Activated CD8-positive, alpha-beta T cell treated with anti-CD3 and anti-CD28 coated beads for 36 hours (primary cell): ENCODE measurements at regions of chr10 and their contacts with region 1.

Region 1: GRCh38 chr10:100518761-100519241 is 860 bp downstream of the SEC31B start:
- DNase-seq: peak; percentile 82
- ATAC-seq: peak; percentile 86
- H3K4me3 Mint-ChIP-seq: no peak overlapping the region
- H3K27ac Mint-ChIP-seq: peak overlapping the region; percentile 52
- H3K4me1 Mint-ChIP-seq: peaks cover 18% of the 10 kb centered on the region
- H3K27me3 Mint-ChIP-seq: no peaks in the 10 kb centered on the region
- CTCF ChIP-seq: peak; percentile 97

Region 2: GRCh38 chr10:100338434-100339036 is 180.3 kb before region 1 on chr10:
- CTCF ChIA-PET with region 1: interaction called, 65 read pairs
- POLR2A ChIA-PET with region 1: interaction called, 7 read pairs
- intact Hi-C with region 1: no loop called
- DNase-seq: peak; percentile 90
- ATAC-seq: peak; percentile 92
- H3K4me3 Mint-ChIP-seq: no peak overlapping the region
- H3K27ac Mint-ChIP-seq: peak overlapping the region; percentile 44
- H3K4me1 Mint-ChIP-seq: peaks cover 2% of the 10 kb centered on the region
- H3K27me3 Mint-ChIP-seq: peaks cover 1% of the 10 kb centered on the region
- CTCF ChIP-seq: peak; percentile 91

Region 3: DNA sequence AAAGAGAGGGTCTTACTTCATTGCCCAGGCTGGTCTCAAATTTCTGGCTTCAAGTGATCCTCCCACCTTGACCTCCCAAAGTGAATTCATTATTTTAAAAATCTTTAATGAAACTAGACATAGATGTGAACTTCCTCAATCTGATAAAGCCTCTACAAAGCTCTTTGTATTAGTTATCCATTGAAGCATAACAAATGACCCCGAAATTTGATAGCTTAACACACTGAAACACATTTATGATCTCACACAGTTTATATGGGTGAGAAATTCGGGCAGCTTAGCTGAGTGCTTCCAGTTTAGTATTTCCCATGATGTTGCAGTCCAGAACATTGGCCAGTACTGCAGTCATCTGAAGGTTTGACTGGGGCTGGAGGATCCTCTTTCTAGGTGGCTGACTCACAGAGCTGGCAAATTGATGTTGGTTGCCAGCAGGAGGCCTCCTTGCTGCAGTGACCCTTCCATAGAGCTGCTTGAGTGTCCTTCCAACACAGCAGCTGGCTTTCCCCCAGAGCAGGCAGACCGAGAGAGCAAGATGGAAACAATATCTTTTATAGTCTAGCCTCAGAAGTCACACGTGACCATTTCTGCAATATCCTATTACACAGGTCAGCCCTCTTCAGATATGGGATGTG is 72.6 kb before region 1 on chr10:
- CTCF ChIA-PET with region 1: interaction called, 10 read pairs
- POLR2A ChIA-PET with region 1: interaction called, 3 read pairs
- intact Hi-C with region 1: no loop called
- DNase-seq: no peak
- ATAC-seq: no peak
- H3K4me3 Mint-ChIP-seq: no peak overlapping the region
- H3K27ac Mint-ChIP-seq: no peak overlapping the region
- H3K4me1 Mint-ChIP-seq: no peaks in the 10 kb centered on the region
- H3K27me3 Mint-ChIP-seq: no peaks in the 10 kb centered on the region
- CTCF ChIP-seq: no peak

Region 4: DNA sequence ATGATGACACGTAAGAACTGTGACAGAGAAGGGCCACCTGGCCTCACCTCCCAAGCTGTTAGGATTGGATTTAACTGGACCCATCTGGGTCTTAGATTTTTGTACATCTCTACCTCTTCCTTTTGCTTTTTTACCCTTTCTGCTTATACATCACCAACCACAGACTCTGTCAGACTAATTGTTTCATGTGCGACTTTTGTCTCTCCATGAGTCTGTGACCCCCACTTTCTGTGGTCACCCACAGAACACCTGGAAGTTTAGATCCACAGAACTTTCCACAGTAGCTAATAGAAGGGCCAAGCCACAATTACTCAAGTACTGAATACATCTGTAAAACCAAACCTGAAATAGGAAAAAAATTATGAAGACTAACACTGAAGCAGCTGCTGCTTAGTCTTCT is 22.2 kb before region 1 on chr10:
- CTCF ChIA-PET with region 1: interaction called, 23 read pairs
- POLR2A ChIA-PET with region 1: interaction called, 3 read pairs
- intact Hi-C with region 1: no loop called
- DNase-seq: peak; percentile 50
- ATAC-seq: peak; percentile 60
- H3K4me3 Mint-ChIP-seq: no peak overlapping the region
- H3K27ac Mint-ChIP-seq: peak overlapping the region; percentile 23
- H3K4me1 Mint-ChIP-seq: peaks cover 17% of the 10 kb centered on the region
- H3K27me3 Mint-ChIP-seq: no peaks in the 10 kb centered on the region
- CTCF ChIP-seq: no peak

Region 5: DNA sequence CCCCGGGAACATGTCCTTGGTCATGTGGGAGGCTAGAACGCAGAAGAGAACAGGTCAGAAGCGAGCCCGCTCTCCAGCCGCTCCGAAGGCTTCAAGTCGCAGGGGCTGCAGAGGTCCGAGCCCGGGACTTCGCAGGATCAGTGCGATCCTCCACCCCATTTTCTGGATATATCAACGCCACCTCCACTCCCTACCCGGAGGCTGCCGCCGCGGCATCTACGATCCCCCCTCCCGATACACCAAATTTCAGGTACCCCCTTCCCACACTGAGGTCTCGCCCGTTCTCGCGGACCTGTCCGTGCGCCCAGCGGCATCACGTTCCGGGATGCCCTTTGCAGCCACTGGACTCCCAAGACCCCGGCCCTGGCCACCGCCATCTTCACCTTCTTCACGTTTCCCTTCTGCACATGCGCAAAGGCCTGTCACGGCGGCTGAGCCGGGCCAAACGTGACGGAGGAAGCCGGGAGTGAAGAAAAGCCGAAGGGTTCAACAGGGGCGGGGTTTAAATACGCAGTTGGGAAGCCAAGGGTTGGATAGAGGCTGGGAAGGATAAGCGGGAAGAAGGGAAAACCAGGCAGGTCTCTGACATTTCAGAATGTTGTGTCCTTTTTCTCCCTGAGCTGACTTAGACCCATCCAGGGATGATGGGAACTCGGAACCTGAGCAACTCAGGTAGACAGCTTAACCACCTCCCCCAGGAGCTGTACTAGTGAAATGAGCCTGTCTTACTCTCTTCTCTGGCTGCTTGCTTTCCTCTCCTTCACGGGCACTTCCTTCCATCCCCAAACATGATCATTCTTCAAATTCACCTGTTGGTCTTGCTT is 10.9 kb after region 1 on chr10 and contains the start of gene NDUFB8:
- CTCF ChIA-PET with region 1: interaction called, 47 read pairs
- POLR2A ChIA-PET with region 1: interaction called, 7 read pairs
- intact Hi-C with region 1: no loop called
- DNase-seq: peak; percentile 92
- ATAC-seq: peak; percentile 72
- H3K4me3 Mint-ChIP-seq: peak within 1 kb of the TSS; percentile 85
- H3K27ac Mint-ChIP-seq: peak within 1 kb of the TSS; percentile 95
- H3K4me1 Mint-ChIP-seq: peaks cover 32% of the 10 kb centered on the region
- H3K27me3 Mint-ChIP-seq: no peaks in the 10 kb centered on the region
- CTCF ChIP-seq: no peak
- total RNA-seq, gene NDUFB8: 365 to 384 TPM